AG04449 (cell line): ENCODE measurements at regions of chr12 and their contacts with region 1.

Region 1: GRCh38 chr12:106118386-106119130 is 20.2 kb downstream of the NUAK1 start:
- DNase-seq: no peak
- H3K4me3 ChIP-seq: no peak overlapping the region
- CTCF ChIP-seq: no peak

Region 2: DNA sequence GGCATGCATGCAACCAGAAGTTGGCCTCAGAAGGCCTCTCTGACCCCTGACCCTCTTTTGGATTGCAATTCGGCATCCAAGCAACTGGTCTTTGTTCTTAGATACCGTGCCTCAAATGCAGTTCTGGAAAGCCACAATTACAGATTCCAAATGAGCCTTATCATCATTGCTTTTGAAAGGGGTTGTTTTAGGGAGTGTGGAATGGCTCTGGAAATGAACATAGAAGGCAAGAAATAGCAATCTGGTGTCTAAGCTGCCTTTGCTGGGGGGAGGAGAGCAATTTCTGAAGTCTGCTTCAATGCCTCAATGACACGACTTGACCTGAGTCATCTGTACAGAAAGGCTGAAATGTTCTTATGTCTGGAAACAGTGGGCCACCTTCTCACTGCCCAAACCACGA is 229.9 kb before region 1 on chr12:
- CTCF ChIA-PET with region 1: no interaction called
- POLR2A ChIA-PET with region 1: no interaction called
- DNase-seq: peak; percentile 54
- H3K4me3 ChIP-seq: no peak overlapping the region
- CTCF ChIP-seq: no peak

Region 3: GRCh38 chr12:106108185-106108835 is 10.2 kb before region 1 on chr12:
- CTCF ChIA-PET with region 1: interaction called, 15 read pairs
- POLR2A ChIA-PET with region 1: interaction called, 4 read pairs
- DNase-seq: no peak
- H3K4me3 ChIP-seq: no peak overlapping the region
- CTCF ChIP-seq: peak; percentile 20

Region 4: GRCh38 chr12:106170285-106170684 is 51.7 kb after region 1 on chr12:
- CTCF ChIA-PET with region 1: no interaction called
- POLR2A ChIA-PET with region 1: no interaction called
- DNase-seq: peak; percentile 38
- H3K4me3 ChIP-seq: no peak overlapping the region
- CTCF ChIP-seq: no peak